ENCODE measurements at regions of chr17 and their contacts with region 1.

Region 1: DNA sequence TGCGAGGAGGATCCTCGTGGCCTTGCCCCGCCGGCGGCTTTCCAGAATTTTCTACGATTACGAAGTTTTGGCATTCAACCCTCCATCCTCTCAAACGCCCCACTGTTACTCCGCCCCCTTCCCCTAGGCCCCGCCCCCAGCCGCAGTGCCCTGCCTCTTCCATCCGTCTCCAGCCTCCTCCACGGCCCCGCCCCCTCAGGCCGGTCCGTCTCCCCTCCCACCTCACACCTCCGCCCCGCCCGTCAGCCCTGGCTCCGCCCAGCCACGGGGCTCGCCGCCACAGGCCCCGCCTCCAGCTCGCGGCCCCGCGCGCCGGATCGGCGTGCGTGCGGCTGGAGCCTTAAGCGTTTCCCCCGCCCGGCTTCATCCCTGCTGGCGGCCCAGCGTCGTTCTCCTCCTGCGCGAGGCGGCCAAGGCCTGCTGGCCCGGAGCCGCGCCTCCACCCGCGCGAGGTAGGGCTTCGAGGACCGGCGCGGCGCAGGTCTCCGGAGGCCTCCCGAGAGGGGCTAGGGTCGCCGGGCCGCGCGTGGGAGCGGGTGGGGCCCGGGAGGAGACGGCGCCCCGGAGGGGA is at the starts of genes C17orf67 and DGKE:
- DNase-seq: peak; percentile 100
- ATAC-seq: peak; percentile 93
- H3K4me3 Mint-ChIP-seq: peak within 1 kb of the TSS; percentile 86
- H3K27ac Mint-ChIP-seq: peak within 1 kb of the TSS; percentile 90
- H3K4me1 Mint-ChIP-seq: peaks cover 62% of the 10 kb centered on the region
- H3K27me3 Mint-ChIP-seq: no peaks in the 10 kb centered on the region
- total RNA-seq, gene C17orf67: 4.0 to 5.0 TPM
- total RNA-seq, gene DGKE: 22.4 to 27.4 TPM

Region 2: GRCh38 chr17:56592487-56593085 is 241.3 kb before region 1 on chr17:
- CTCF ChIA-PET with region 1: interaction called, 3 read pairs
- POLR2A ChIA-PET with region 1: no interaction called
- intact Hi-C with region 1: loop called in 1 of 2 experiments (anchors 2 kb)
- DNase-seq: peak; percentile 82
- ATAC-seq: peak; percentile 60
- H3K4me3 Mint-ChIP-seq: peak overlapping the region; percentile 64
- H3K27ac Mint-ChIP-seq: no peak overlapping the region
- H3K4me1 Mint-ChIP-seq: peaks cover 20% of the 10 kb centered on the region
- H3K27me3 Mint-ChIP-seq: peaks cover 23% of the 10 kb centered on the region

Region 3: GRCh38 chr17:56727876-56728620 is 105.8 kb before region 1 on chr17:
- CTCF ChIA-PET with region 1: no interaction called
- POLR2A ChIA-PET with region 1: no interaction called
- intact Hi-C with region 1: no loop called
- DNase-seq: peak; percentile 18
- ATAC-seq: peak; percentile 74
- H3K4me3 Mint-ChIP-seq: no peak overlapping the region
- H3K27ac Mint-ChIP-seq: no peak overlapping the region
- H3K4me1 Mint-ChIP-seq: no peaks in the 10 kb centered on the region
- H3K27me3 Mint-ChIP-seq: peaks cover 2% of the 10 kb centered on the region

Region 4: GRCh38 chr17:56819431-56820145 is 14.3 kb before region 1 on chr17:
- CTCF ChIA-PET with region 1: interaction called, 26 read pairs
- POLR2A ChIA-PET with region 1: no interaction called
- intact Hi-C with region 1: loop called in 1 of 2 experiments (anchors 2 kb)
- DNase-seq: peak; percentile 84
- ATAC-seq: peak; percentile 83
- H3K4me3 Mint-ChIP-seq: no peak overlapping the region
- H3K27ac Mint-ChIP-seq: peak overlapping the region; percentile 7
- H3K4me1 Mint-ChIP-seq: peaks cover 22% of the 10 kb centered on the region
- H3K27me3 Mint-ChIP-seq: no peaks in the 10 kb centered on the region

Region 5: GRCh38 chr17:56913864-56914640 is 80.2 kb after region 1 on chr17 and contains the start of gene TRIM25:
- CTCF ChIA-PET with region 1: interaction called, 6 read pairs
- POLR2A ChIA-PET with region 1: interaction called, 3 read pairs
- intact Hi-C with region 1: loop called in 1 of 2 experiments (anchors 1 kb)
- DNase-seq: peak; percentile 97
- ATAC-seq: peak; percentile 66
- H3K4me3 Mint-ChIP-seq: peak within 1 kb of the TSS; percentile 90
- H3K27ac Mint-ChIP-seq: peak within 1 kb of the TSS; percentile 95
- H3K4me1 Mint-ChIP-seq: peaks cover 61% of the 10 kb centered on the region
- H3K27me3 Mint-ChIP-seq: no peaks in the 10 kb centered on the region
- total RNA-seq, gene TRIM25: 173 to 241 TPM

Region 6: DNA sequence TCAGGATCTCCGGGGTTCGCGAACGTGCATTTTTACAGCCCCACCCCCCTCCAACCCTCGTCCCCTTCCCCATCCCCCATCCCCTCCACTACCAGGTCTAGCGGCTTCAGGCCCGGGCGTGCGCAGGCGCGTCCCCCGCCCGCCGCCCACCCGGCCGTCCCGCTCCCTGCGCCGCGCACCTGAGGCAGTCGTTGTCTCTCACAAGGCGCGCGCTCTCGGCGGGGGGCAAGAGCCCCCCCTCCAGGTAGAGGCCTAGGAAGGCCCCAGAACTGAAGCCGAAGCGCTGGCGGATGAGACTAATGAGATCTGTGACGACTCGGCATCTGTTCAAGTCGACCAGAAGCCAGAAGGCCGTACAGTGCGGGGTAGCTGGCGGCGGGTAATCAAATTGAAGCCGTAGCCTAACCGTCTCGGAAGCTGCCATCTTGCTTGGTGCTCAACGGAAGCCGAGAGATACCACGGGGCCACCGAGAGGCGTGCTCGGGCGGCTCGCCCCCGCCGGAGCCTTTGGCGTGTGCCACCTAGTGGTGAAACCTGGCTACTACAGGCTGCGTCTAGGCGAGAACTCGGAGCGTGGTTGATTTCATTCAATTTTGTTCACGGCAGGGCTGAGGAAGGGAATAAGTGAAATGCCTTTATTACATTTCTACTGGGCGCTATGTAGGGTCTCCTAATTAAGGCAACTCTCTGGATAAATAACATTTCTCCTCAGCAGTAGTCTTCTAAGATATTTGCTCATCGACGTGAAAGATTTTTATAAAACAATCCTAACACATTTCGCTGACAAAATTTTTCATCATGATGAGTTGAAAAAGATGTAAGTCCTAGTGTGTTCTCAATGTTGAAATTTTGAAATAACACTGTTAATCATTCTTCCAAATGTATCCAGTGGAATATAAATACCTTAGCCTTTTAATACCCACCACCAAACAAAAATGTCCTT is 127.0 kb after region 1 on chr17 and contains the start of gene COIL:
- CTCF ChIA-PET with region 1: interaction called, 6 read pairs
- POLR2A ChIA-PET with region 1: interaction called, 3 read pairs
- intact Hi-C with region 1: loop called (anchors 1 to 5 kb)
- DNase-seq: peak; percentile 97
- ATAC-seq: peak; percentile 98
- H3K4me3 Mint-ChIP-seq: peak within 1 kb of the TSS; percentile 78
- H3K27ac Mint-ChIP-seq: peak within 1 kb of the TSS; percentile 81
- H3K4me1 Mint-ChIP-seq: peaks cover 23% of the 10 kb centered on the region
- H3K27me3 Mint-ChIP-seq: no peaks in the 10 kb centered on the region
- total RNA-seq, gene COIL: 20.9 to 21.3 TPM

Region 7: GRCh38 chr17:57084802-57085447 is 251.0 kb after region 1 on chr17 and contains the start of gene AKAP1:
- CTCF ChIA-PET with region 1: no interaction called
- POLR2A ChIA-PET with region 1: no interaction called
- intact Hi-C with region 1: loop called (anchors 1 to 10 kb)
- DNase-seq: peak; percentile 97
- ATAC-seq: peak; percentile 96
- H3K4me3 Mint-ChIP-seq: peak within 1 kb of the TSS; percentile 81
- H3K27ac Mint-ChIP-seq: peak within 1 kb of the TSS; percentile 87
- H3K4me1 Mint-ChIP-seq: peaks cover 44% of the 10 kb centered on the region
- H3K27me3 Mint-ChIP-seq: no peaks in the 10 kb centered on the region
- total RNA-seq, gene AKAP1: 27.0 to 29.8 TPM

Measured in activated CD4-positive, alpha-beta T cell treated with anti-CD3 and anti-CD28 coated beads for 36 hours (primary cell).